Left ventricle myocardium inferior (tissue), 1 donor: ENCODE measurements at regions of chr7 and their contacts with region 1.

Region 1: DNA sequence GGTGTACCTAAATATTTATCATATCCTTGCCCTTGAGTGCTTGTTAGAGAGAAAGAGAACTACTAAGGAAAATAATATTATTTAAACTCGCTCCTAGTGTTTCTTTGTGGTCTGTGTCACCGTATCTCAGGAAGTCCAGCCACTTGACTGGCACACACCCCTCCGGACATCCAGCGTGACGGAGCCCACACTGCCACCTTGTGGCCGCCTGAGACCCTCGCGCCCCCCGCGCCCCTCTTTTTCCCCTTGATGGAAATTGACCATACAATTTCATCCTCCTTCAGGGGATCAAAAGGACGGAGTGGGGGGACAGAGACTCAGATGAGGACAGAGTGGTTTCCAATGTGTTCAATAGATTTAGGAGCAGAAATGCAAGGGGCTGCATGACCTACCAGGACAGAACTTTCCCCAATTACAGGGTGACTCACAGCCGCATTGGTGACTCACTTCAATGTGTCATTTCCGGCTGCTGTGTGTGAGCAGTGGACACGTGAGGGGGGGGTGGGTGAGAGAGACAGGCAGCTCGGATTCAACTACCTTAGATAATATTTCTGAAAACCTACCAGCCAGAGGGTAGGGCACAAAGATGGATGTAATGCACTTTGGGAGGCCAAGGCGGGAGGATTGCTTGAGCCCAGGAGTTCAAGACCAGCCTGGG is 11.4 kb downstream of the SERPINE1 start:
- DNase-seq: peak; percentile 57
- H3K4me3 ChIP-seq: peak overlapping the region; percentile 33
- H3K27ac ChIP-seq: peak overlapping the region; percentile 60
- H3K4me1 ChIP-seq: peaks cover 18% of the 10 kb centered on the region
- H3K27me3 ChIP-seq: peaks cover 16% of the 10 kb centered on the region
- CTCF ChIP-seq: peak; percentile 85

Region 2: GRCh38 chr7:101099969-101100781 is 38.2 kb before region 1 on chr7:
- intact Hi-C with region 1: loop called (anchors 5 kb)
- DNase-seq: peak; percentile 91
- H3K4me3 ChIP-seq: peak overlapping the region; percentile 23
- H3K27ac ChIP-seq: peak overlapping the region; percentile 67
- H3K4me1 ChIP-seq: peaks cover 31% of the 10 kb centered on the region
- H3K27me3 ChIP-seq: no peaks in the 10 kb centered on the region
- CTCF ChIP-seq: no peak

Region 3: DNA sequence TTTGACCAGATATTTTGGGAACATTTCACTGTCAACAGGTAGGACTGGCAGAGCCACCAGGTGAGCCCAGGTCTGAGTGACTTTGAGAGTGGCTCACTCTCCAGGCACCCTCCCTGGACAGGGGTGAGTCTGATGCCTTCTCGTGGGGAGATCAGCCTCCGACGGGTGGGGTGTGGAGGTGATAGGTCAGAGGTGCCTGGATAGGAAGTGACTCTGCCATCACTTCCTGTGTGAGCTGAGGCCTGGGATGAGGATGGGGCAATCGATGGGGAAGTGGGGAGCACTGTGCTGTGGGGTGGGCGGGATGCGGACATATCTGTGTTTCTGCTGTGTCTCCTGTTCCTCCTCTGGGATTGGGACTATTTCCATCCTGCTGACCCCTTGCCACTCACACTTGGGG is 148.7 kb after region 1 on chr7:
- intact Hi-C with region 1: loop called (anchors 5 kb)
- DNase-seq: no peak
- H3K4me3 ChIP-seq: no peak overlapping the region
- H3K27ac ChIP-seq: no peak overlapping the region
- H3K4me1 ChIP-seq: peaks cover 4% of the 10 kb centered on the region
- H3K27me3 ChIP-seq: peaks cover 40% of the 10 kb centered on the region
- CTCF ChIP-seq: no peak